Activated naive CD4-positive, alpha-beta T cell treated with anti-CD3 and anti-CD28 coated beads for 36 hours (primary cell): ENCODE measurements at regions of chr5 and their contacts with region 1.

Region 1: DNA sequence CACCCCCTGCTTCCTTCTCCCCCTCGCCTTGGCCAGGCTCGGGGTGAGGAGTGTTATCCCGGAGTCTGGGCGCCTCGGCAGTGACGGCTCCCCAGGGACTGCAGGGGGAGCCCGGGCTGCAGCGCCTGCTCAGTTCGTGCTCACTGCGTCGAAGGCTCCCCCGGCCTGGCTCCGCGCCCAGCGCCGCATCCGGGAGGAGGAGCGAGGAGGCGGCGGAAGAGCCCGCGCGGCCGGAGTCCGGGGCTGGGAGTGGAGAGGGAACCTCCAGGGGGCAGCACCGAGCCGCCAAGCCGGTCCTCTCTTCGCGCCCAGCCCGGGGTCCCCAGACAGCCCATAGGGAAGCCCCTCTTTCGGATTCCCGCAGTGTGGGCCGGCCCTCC is 1.3 kb upstream of the EGR1 start:
- DNase-seq: peak; percentile 95
- H3K4me3 Mint-ChIP-seq: peak overlapping the region; percentile 83
- H3K27ac Mint-ChIP-seq: peak overlapping the region; percentile 93
- H3K4me1 Mint-ChIP-seq: peaks cover 59% of the 10 kb centered on the region
- H3K27me3 Mint-ChIP-seq: no peaks in the 10 kb centered on the region

Region 2: GRCh38 chr5:138331449-138332368 is 132.3 kb before region 1 on chr5 and contains the start of gene CDC25C:
- CTCF ChIA-PET with region 1: no interaction called
- intact Hi-C with region 1: loop called (anchors 2 kb)
- DNase-seq: peak; percentile 99
- H3K4me3 Mint-ChIP-seq: peak within 1 kb of the TSS; percentile 81
- H3K27ac Mint-ChIP-seq: peak within 1 kb of the TSS; percentile 83
- H3K4me1 Mint-ChIP-seq: peaks cover 9% of the 10 kb centered on the region
- H3K27me3 Mint-ChIP-seq: no peaks in the 10 kb centered on the region
- total RNA-seq, gene CDC25C: 23.2 to 26.6 TPM

Region 3: DNA sequence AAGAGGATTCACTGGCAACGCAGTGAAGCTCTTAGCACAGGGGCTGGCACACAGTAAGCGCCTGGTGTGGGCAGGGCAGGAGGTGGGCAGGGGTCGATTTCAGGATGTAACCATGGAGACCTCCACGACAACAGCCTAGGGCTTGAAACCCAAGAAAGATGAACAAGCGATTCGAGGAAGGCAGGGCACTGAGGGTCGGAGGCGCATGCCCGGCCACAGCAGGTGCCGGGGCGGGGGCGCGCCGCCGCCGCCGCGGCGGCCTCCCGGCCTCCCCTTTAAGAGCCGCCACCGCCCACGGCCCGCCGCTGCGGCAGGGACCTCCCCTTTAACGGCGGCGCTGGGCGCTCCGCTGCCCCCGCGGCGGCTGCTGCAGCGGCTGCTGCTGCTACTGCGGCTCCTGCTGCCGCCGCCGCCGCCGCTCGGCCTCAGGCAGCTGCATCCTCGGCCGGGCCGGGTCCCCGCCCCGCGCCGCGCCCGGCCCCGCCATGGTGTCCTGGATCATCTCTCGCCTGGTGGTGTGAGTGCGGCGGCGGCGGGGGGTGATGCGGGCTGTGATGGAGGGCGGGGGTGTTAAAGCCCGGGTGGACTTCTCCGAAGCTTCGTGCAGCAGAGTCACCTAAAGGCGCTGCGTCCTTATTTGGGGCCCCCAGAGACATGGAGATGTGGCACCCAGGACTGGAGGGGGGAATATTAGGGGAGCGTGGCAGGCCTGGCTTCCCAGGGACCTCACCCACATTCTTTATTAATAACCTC is 25.1 kb before region 1 on chr5 and contains the start of gene REEP2:
- CTCF ChIA-PET with region 1: no interaction called
- intact Hi-C with region 1: loop called (anchors 1 kb)
- DNase-seq: peak; percentile 62
- H3K4me3 Mint-ChIP-seq: peak within 1 kb of the TSS; percentile 72
- H3K27ac Mint-ChIP-seq: no peak within 1 kb of the TSS
- H3K4me1 Mint-ChIP-seq: peaks cover 5% of the 10 kb centered on the region
- H3K27me3 Mint-ChIP-seq: peaks cover 3% of the 10 kb centered on the region
- total RNA-seq, gene REEP2: 1.8 to 2.2 TPM

Region 4: GRCh38 chr5:138503487-138504270 is 39.7 kb after region 1 on chr5:
- CTCF ChIA-PET with region 1: interaction called, 51 read pairs
- intact Hi-C with region 1: loop called (anchors 1 kb)
- DNase-seq: peak; percentile 53
- H3K4me3 Mint-ChIP-seq: no peak overlapping the region
- H3K27ac Mint-ChIP-seq: no peak overlapping the region
- H3K4me1 Mint-ChIP-seq: no peaks in the 10 kb centered on the region
- H3K27me3 Mint-ChIP-seq: no peaks in the 10 kb centered on the region

Region 5: DNA sequence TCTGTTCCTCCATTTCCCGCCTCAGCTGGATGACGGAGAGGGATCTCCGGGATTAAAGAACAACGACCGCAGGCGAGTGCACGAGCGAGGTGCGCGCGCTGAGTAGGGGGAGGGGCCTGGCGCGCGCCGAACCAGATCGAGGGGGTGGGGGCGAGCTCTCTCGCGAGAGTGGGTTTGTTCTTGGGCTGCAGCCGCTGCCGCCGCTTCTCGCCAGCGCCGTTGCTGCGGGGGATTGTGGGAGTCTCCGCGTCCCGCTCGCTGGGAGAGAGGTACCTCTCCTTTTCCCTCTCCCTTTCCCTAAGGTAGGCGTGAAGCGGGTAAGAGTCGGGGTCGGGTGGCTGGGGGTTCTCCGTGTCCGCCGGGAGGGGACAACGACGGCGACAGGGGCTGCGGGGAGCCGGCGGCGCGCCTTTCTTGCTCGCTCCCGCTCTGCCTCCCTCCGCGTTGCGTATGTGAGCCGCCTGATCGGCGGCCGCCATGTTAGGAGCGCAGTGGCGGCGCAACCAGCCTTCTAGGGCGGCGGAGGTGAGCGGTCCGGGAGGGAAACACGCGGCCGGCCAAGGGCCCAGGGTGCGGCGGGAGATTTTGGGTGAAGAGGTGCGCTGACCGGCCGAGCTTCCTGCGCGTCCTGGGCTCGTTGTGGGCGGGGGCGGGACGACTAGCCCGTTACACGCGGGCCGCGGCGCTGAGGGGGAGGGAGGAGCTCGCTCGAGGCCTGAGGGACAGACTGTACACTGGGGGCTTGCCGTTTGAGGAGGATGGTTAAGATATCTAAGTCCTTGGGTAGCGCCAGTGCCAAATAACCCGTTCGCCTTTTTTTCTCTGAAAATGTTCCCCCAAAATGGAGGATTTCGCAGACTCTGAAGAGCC is 829.7 kb after region 1 on chr5 and contains the start of gene MATR3:
- CTCF ChIA-PET with region 1: no interaction called
- intact Hi-C with region 1: loop called (anchors 10 kb)
- DNase-seq: peak; percentile 96
- H3K4me3 Mint-ChIP-seq: peak within 1 kb of the TSS; percentile 89
- H3K27ac Mint-ChIP-seq: peak within 1 kb of the TSS; percentile 97
- H3K4me1 Mint-ChIP-seq: peaks cover 37% of the 10 kb centered on the region
- H3K27me3 Mint-ChIP-seq: no peaks in the 10 kb centered on the region
- total RNA-seq, gene MATR3: 137 to 164 TPM